Panc1 (cell line): ENCODE measurements at regions of chr12 and their contacts with region 1.

Region 1: DNA sequence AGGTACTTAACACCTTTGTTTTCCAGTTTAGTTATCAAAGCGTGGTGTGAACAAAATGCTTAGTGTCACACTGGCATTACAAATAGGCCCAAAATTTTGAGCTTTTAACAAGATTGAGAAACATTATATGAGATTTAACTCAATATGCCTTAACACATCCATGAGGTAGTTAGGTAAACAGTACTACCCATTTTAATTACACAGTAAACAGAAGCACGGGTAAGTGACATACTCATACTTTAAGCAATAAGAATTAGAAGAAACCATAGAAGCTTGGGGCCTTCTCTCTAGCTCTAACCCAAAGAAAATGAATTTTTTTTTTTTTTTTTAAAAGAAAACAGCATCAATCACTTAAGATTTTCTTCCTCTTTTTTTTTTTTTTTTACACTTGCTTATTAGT is 15.5 kb upstream of the PHLDA1 start:
- DNase-seq: no peak
- ATAC-seq: no peak
- H3K4me3 ChIP-seq: no peak overlapping the region
- H3K27ac ChIP-seq: peak overlapping the region; percentile 4; the same call in 1 of the 2 replicates
- H3K4me1 ChIP-seq: no peaks in the 10 kb centered on the region; the same call in 1 of the 2 replicates
- H3K27me3 ChIP-seq: no peaks in the 10 kb centered on the region
- CTCF ChIP-seq: no peak

Region 2: GRCh38 chr12:76123451-76124212 is 76.6 kb after region 1 on chr12:
- CTCF ChIA-PET with region 1: no interaction called
- POLR2A ChIA-PET with region 1: interaction called, 11 read pairs
- in situ Hi-C with region 1: no loop called
- intact Hi-C with region 1: no loop called
- DNase-seq: no peak
- ATAC-seq: 0 out of 2 replicates have a peak, but pooled peaks have one; percentile 34
- H3K4me3 ChIP-seq: no peak overlapping the region
- H3K27ac ChIP-seq: no peak overlapping the region
- H3K4me1 ChIP-seq: no peaks in the 10 kb centered on the region
- H3K27me3 ChIP-seq: no peaks in the 10 kb centered on the region
- CTCF ChIP-seq: no peak